Heart right ventricle (tissue), 16 donors: ENCODE measurements at regions of chr14 and their contacts with region 1.

Region 1: DNA sequence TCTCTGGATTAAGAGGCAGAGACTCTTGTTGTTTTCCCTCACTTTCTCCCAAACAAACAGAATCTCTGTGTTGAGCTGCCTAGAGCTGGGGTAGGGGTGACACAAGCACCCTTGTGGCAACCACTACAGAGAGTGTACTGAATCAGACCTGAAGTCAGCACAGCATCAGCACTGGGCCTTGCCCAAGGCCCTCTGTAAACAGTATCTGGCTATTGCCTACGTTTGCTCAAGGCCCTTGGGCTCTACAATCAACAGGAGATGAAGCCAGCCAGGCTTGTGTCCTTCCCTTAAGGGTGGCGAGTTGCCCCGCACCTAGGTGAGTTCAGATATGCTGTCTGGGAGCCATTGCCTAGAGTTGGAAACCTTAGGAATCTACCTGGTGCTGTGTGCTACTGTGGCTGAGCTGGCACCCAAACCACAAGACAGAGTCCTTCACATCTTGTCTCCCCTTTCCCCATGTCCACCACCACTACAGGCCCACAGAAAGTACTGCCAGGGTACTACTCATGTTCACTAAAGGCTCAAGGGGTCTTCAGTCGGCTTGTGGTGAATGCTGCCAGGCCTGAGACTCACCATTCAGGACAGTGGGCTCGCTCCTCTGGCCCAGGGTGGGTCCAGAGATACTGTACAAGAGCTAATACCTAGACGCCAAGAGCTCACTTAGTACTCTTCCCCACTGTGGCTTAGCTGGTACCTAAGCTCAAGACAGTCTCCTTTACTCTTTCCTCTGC is 206.8 kb downstream of the SYNE2 start:
- DNase-seq: no peak
- ATAC-seq: no peak
- H3K4me3 ChIP-seq: no peak overlapping the region
- H3K27ac ChIP-seq: no peak overlapping the region
- H3K4me1 ChIP-seq: no peaks in the 10 kb centered on the region
- H3K27me3 ChIP-seq: no peaks in the 10 kb centered on the region
- CTCF ChIP-seq: no peak

Region 2: DNA sequence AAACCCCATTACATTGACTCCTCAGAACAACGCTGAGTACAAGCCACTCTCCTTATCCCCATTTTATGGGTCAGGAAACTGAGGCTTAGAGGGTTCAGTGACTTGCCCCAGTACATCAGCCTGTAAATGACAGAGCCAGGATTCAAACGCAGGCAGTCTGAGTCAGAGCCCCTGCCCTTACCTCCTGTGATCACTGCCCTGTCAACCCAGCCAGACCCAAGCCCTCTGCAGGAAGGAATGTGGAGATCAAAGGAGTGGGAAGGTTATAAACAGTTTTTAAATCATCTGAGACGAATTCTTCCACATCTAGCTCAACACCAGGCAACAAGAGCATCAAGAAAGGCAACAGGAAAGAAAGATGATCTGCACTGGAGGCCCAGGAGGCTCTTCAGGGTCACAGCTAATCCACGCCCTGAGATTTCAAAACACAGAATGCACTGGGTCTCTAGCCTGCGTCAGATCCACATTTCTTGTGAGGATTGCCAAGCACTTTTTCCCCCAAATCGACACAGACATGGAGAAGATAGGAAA is 781.6 kb after region 1 on chr14:
- intact Hi-C with region 1: no loop called
- DNase-seq: peak in 1 of 2 donors; percentile 48
- ATAC-seq: peak; percentile 67 to 89 (median 81)
- H3K4me3 ChIP-seq: peak overlapping the region in 6 of 10 donors; percentile 7 to 37 (median 26)
- H3K27ac ChIP-seq: peak overlapping the region; percentile 43 to 90 (median 83)
- H3K4me1 ChIP-seq: peaks cover 0 to 52% (median 18%) of the 10 kb centered on the region in 9 donors
- H3K27me3 ChIP-seq: peaks cover 0 to 29% (median 8%) of the 10 kb centered on the region in 7 donors
- CTCF ChIP-seq: peak in 7 of 9 donors; percentile 13 to 51 (median 41)

Region 3: GRCh38 chr14:65003394-65003793 is 943.8 kb after region 1 on chr14:
- intact Hi-C with region 1: loop called in 1 of 10 experiments (anchors 5 kb)
- DNase-seq: no peak
- ATAC-seq: no peak
- H3K4me3 ChIP-seq: no peak overlapping the region
- H3K27ac ChIP-seq: no peak overlapping the region
- H3K4me1 ChIP-seq: peaks cover 0 to 23% (median 6%) of the 10 kb centered on the region in 9 donors
- H3K27me3 ChIP-seq: no peaks in the 10 kb centered on the region
- CTCF ChIP-seq: no peak